Mammary epithelial cell (primary cell): ENCODE measurements at regions of chr5 and their contacts with region 1.

Region 1: DNA sequence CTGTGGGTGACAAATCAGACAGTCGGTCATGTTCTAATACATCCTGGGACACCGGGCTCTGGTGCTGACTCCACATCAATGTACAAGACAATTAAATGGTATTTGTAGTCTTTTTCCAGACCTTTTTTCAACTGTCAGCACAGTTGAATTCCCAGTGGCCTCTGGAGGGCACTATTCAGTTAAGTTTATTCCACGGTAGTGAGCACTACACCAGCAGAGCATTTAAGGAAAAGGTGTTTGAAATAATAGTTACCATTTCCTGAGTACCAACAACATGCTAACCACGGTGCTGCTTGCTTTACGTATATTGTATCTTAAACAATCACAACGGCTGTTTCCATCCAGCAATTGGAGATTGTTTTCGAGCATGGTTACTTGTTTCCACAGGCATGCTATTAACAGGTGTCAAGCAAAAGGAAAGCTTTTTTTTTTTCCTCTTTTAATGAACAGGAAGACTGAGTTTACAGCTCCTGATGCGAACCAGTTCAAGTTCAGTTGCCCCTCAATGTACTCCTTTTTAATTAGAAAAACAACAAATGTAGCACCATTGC is 186.7 kb downstream of the PDZD2 start:
- DNase-seq: peak; percentile 61
- H3K4me3 ChIP-seq: no peak overlapping the region
- H3K27ac ChIP-seq: no peak overlapping the region
- H3K4me1 ChIP-seq: peaks cover 3% of the 10 kb centered on the region
- H3K27me3 ChIP-seq: no peaks in the 10 kb centered on the region
- CTCF ChIP-seq: peak; percentile 67 to 72

Region 2: GRCh38 chr5:31993165-31993961 is 167.8 kb after region 1 on chr5:
- CTCF ChIA-PET with region 1: no interaction called
- dilution Hi-C with region 1: no loop called
- in situ Hi-C with region 1: no loop called
- intact Hi-C with region 1: loop called (anchors 1 kb)
- DNase-seq: peak; percentile 5
- H3K4me3 ChIP-seq: no peak overlapping the region
- H3K27ac ChIP-seq: no peak overlapping the region
- H3K4me1 ChIP-seq: peaks cover 28% of the 10 kb centered on the region
- H3K27me3 ChIP-seq: no peaks in the 10 kb centered on the region
- CTCF ChIP-seq: no peak

Region 3: DNA sequence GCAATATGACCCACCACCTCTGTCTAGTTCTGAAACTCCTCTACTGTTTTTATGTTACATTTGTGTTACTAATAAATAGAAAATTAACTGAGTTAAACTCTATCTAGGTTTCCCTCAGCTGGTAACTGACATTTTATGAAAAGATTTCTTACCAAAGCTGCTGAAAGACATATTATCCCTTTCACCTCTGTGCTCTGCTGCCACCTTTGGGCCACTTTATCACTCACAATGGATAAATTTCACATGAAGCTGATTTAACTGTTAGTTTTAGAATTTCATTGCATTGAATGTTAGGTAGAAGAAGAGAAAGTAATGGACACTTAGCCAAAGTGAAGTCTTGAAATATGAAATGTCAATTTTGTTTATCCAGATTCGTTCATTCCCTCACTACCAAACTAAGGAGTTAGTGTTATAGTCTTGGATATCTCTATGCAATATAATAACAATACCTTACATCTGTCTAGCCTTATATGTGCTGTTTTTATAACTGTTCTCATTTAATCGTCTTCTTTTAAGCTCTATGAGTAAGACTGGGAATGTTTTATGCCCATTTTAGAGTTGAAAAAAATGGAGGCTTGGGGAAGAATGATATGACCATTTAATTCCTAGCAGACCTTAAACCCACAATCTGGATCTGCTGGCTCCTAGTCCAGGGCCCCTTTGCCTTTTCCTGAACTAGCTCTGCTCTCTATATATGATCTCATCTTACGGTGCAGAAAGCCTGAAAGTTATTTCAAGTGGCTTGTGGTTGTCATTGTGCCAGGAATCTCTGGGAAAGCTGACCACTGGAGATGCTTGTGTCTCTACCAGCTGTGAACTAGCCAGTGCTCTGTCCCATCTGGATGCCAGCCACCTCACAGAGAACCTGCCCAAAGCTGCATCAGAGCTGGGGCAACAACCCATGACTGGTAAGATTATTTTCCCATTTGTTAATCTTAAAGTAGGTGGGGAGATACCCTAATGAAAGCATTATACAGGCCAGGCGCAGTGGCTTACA is 251.4 kb after region 1 on chr5:
- CTCF ChIA-PET with region 1: interaction called, 15 read pairs
- dilution Hi-C with region 1: no loop called
- in situ Hi-C with region 1: loop called (anchors 5 to 10 kb)
- intact Hi-C with region 1: loop called (anchors 1 kb)
- DNase-seq: peak; percentile 39
- H3K4me3 ChIP-seq: no peak overlapping the region
- H3K27ac ChIP-seq: no peak overlapping the region
- H3K4me1 ChIP-seq: peaks cover under 1% of the 10 kb centered on the region
- H3K27me3 ChIP-seq: no peaks in the 10 kb centered on the region
- CTCF ChIP-seq: peak; percentile 73 to 79

Region 4: GRCh38 chr5:32098291-32098690 is 272.7 kb after region 1 on chr5:
- CTCF ChIA-PET with region 1: no interaction called
- dilution Hi-C with region 1: loop called (anchors 5 kb)
- in situ Hi-C with region 1: no loop called
- intact Hi-C with region 1: loop called (anchors 1 kb)
- DNase-seq: no peak
- H3K4me3 ChIP-seq: no peak overlapping the region
- H3K27ac ChIP-seq: no peak overlapping the region
- H3K4me1 ChIP-seq: no peaks in the 10 kb centered on the region
- H3K27me3 ChIP-seq: no peaks in the 10 kb centered on the region
- CTCF ChIP-seq: no peak

Region 5: GRCh38 chr5:32428426-32428825 is 602.8 kb after region 1 on chr5:
- CTCF ChIA-PET with region 1: no interaction called
- dilution Hi-C with region 1: no loop called
- in situ Hi-C with region 1: no loop called
- intact Hi-C with region 1: no loop called
- DNase-seq: no peak
- H3K4me3 ChIP-seq: no peak overlapping the region
- H3K27ac ChIP-seq: no peak overlapping the region
- H3K4me1 ChIP-seq: no peaks in the 10 kb centered on the region
- H3K27me3 ChIP-seq: no peaks in the 10 kb centered on the region
- CTCF ChIP-seq: no peak